CD8-positive, alpha-beta memory T cell (primary cell): ENCODE measurements at regions of chr9 and their contacts with region 1.

Region 1: DNA sequence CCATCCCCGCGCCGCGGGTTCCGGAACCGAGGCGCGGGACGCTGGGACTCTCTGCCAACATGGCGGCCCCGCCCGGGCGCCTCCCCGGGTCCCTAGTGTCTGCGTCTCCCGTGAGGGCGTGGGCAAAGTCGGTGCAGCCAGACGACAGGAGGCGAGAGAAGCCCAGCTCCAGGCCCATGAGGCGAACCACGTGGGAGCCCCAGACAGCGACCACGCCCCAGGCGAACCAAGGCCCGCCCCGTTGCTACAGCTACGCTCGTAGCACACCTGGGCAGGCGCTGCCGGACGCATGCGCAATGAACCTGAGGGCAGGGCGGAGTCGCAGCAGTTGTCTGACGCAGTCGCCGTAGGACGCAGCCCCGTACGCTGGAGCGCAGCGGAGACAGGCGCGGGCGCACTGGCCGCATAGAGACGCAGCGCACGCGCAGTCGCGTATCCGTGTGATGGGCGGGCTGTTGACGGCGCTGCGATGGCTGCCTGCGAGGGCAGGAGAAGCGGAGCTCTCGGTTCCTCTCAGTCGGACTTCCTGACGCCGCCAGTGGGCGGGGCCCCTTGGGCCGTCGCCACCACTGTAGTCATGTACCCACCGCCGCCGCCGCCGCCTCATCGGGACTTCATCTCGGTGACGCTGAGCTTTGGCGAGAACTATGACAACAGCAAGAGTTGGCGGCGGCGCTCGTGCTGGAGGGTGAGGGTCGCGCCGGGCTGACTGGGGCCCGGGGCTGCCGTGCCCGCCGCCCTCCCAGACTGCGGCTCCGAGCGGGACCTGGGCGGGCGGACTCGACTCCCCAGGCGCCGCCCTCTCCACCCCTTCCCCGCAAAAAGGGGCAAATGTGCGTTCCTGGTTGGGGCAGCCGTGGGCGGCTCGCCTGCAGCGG is at the start of gene MAN1B1:
- DNase-seq: peak; percentile 99 to 100 (median 99)
- H3K4me3 ChIP-seq: peak within 1 kb of the TSS; percentile 88
- H3K4me3 Mint-ChIP-seq: peak within 1 kb of the TSS; percentile 86 to 93 (median 89)
- H3K27ac ChIP-seq: peak within 1 kb of the TSS; percentile 86
- H3K27ac Mint-ChIP-seq: peak within 1 kb of the TSS; percentile 86 to 99 (median 96)
- H3K4me1 ChIP-seq: peaks cover 19% of the 10 kb centered on the region
- H3K4me1 Mint-ChIP-seq: peaks cover 21 to 41% (median 23%) of the 10 kb centered on the region in 3 donors
- H3K27me3 ChIP-seq: no peaks in the 10 kb centered on the region
- H3K27me3 Mint-ChIP-seq: no peaks in the 10 kb centered on the region
- total RNA-seq, gene MAN1B1: 31.9 to 32.7 TPM

Region 2: DNA sequence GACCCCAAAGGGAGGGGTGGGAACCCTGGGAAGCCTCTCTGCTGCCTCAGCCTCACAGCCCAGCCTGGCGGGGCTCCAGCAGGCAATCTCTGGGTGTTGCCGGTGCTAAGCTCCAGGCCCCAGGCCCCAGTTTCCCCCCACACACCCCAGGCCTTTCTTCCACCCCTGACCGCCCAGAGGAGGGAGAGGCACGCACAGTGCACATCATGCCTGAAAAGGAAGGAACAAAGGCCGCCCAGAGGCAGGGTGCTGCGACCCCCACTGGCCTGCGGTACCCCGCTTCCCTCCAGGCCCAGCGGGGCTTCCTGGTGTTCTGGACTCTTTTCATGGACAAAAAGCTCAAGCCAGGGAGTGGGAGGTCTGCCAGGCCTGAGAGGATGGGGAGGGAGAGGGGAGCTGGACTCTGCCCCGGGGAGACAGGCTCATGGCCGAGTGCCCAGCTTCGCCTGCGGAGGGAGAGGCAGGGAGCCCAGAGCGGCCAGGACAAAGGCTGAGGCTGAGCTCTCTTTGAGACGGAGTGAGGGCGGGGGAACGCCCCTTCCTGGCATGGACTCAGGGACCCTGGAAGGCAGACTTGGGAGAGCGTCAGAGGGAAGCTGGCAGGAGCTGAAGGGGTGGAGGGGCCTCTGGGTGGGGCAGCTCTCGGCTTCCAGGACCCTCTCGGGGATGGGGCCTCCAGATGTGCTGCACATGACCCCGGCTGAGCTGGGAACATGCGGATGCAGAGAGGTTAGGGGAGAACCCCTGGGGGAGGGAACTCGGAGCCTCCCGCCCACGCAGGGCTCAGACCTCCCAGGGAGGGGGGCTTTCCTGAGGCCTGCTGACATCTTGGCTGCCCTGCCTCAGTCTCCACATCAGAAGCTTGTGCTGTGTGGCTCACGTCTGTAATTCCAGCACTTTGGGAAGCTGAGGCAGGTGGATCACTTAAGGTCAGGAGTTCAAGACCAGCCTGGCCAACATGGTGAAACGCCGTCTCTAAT is 31.1 kb before region 1 on chr9:
- CTCF ChIA-PET with region 1: no interaction called
- POLR2A ChIA-PET with region 1: no interaction called
- DNase-seq: no peak
- H3K4me3 ChIP-seq: no peak overlapping the region
- H3K4me3 Mint-ChIP-seq: no peak overlapping the region
- H3K27ac ChIP-seq: no peak overlapping the region
- H3K27ac Mint-ChIP-seq: no peak overlapping the region
- H3K4me1 ChIP-seq: peaks cover 8% of the 10 kb centered on the region
- H3K4me1 Mint-ChIP-seq: no peaks in the 10 kb centered on the region
- H3K27me3 ChIP-seq: peaks cover 25% of the 10 kb centered on the region
- H3K27me3 Mint-ChIP-seq: peaks cover 4 to 7% of the 10 kb centered on the region in 2 donors

Region 3: DNA sequence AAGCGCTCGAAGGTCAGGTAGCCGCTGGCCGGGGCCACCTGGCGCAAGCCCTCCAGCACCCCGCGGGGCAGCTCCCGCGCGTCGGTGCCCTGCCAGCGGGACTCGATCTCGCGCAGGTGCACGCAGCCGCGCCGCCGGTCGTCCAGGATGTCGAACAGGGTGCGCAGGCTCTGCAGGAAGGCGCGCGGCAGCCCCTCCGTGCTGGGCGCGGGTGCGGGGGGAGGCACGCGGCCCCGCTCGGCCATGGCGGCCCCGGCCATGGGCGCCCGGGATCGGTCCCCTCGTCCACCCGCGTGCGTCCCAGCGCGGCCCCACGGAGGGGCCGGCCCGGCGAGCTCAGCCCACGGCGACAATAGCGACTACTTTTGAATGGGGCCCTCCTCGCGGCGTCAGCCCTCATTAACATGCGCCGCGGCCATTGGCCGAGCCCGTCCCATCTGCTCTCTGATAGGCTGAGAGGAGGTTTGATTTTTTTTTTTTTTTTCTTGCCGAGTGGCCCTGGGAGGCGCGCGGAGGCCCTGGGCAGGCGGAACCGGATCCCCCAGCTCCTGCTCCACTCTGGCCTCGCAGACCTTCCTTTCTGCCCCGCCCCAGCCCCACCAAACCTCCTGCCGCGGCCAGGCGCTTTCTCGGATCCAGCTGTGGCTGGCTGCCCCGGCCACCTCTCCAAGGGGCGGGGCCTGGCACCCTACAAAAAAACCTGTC is 16.4 kb before region 1 on chr9 and contains the start of gene SAPCD2:
- CTCF ChIA-PET with region 1: interaction called, 29 read pairs
- POLR2A ChIA-PET with region 1: interaction called, 29 read pairs
- DNase-seq: peak; percentile 80 to 91 (median 85)
- H3K4me3 ChIP-seq: peak within 1 kb of the TSS; percentile 39
- H3K4me3 Mint-ChIP-seq: peak within 1 kb of the TSS; percentile 66 to 88 (median 77)
- H3K27ac ChIP-seq: peak within 1 kb of the TSS; percentile 65
- H3K27ac Mint-ChIP-seq: peak within 1 kb of the TSS in 6 of 8 donors; percentile 43 to 89 (median 75)
- H3K4me1 ChIP-seq: peaks cover 14% of the 10 kb centered on the region
- H3K4me1 Mint-ChIP-seq: peaks cover 6 to 19% (median 12%) of the 10 kb centered on the region in 3 donors
- H3K27me3 ChIP-seq: no peaks in the 10 kb centered on the region
- H3K27me3 Mint-ChIP-seq: peaks cover 3 to 4% of the 10 kb centered on the region in 2 donors
- total RNA-seq, gene SAPCD2: 11.5 to 12.7 TPM